ENCODE measurements at regions of chr6 and their contacts with region 1.

Region 1: GRCh38 chr6:148835920-148836441 is 89.2 kb downstream of the UST start:
- DNase-seq: no peak
- H3K4me3 ChIP-seq: no peak overlapping the region
- H3K27ac ChIP-seq: no peak overlapping the region
- H3K4me1 ChIP-seq: peaks cover 2% of the 10 kb centered on the region
- H3K27me3 ChIP-seq: no peaks in the 10 kb centered on the region
- CTCF ChIP-seq: no peak
- EP300 ChIP-seq: no peak
- POLR2A ChIP-seq: no peak

Region 2: DNA sequence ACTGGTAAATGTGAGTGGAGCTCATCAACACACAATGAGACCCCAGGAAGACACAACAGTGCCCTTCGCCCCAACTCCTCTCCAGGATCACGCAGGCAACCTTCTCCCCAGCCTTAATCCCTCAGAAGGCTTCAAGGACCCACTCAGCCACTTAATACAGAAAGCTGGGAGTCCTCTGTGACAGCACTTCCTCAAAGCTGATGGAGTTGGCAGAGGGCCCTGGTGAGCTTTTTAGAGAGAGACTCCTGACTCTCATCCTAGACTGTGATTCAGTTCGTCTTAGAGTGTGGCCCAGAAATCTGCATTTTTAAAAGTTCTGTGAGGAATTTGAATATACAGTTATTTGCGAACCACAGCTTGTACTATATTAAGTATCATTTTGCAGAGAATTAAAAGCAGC is 98.6 kb after region 1 on chr6:
- intact Hi-C with region 1: loop called in 1 of 4 experiments (anchors 5 kb)
- DNase-seq: peak in 3 of 5 donors; percentile 14 to 47 (median 34)
- H3K4me3 ChIP-seq: no peak overlapping the region
- H3K27ac ChIP-seq: no peak overlapping the region
- H3K4me1 ChIP-seq: peaks cover 3% of the 10 kb centered on the region
- H3K27me3 ChIP-seq: no peaks in the 10 kb centered on the region
- CTCF ChIP-seq: no peak
- EP300 ChIP-seq: no peak
- POLR2A ChIP-seq: no peak

Region 3: GRCh38 chr6:148947621-148948444 is 111.9 kb after region 1 on chr6:
- intact Hi-C with region 1: no loop called
- DNase-seq: peak; percentile 78 to 88 (median 87)
- H3K4me3 ChIP-seq: no peak overlapping the region
- H3K27ac ChIP-seq: no peak overlapping the region
- H3K4me1 ChIP-seq: peaks cover 6% of the 10 kb centered on the region
- H3K27me3 ChIP-seq: no peaks in the 10 kb centered on the region
- CTCF ChIP-seq: peak; percentile 81 to 84 (median 82)
- EP300 ChIP-seq: no peak
- POLR2A ChIP-seq: no peak